Activated CD4-positive, alpha-beta memory T cell treated with anti-CD3 and anti-CD28 coated beads, Interleukin-2, amount 10 ng/mL, durations not matched to agents 7 days and 5 days (primary cell): ENCODE measurements at regions of chr2 and their contacts with region 1.

Region 1: DNA sequence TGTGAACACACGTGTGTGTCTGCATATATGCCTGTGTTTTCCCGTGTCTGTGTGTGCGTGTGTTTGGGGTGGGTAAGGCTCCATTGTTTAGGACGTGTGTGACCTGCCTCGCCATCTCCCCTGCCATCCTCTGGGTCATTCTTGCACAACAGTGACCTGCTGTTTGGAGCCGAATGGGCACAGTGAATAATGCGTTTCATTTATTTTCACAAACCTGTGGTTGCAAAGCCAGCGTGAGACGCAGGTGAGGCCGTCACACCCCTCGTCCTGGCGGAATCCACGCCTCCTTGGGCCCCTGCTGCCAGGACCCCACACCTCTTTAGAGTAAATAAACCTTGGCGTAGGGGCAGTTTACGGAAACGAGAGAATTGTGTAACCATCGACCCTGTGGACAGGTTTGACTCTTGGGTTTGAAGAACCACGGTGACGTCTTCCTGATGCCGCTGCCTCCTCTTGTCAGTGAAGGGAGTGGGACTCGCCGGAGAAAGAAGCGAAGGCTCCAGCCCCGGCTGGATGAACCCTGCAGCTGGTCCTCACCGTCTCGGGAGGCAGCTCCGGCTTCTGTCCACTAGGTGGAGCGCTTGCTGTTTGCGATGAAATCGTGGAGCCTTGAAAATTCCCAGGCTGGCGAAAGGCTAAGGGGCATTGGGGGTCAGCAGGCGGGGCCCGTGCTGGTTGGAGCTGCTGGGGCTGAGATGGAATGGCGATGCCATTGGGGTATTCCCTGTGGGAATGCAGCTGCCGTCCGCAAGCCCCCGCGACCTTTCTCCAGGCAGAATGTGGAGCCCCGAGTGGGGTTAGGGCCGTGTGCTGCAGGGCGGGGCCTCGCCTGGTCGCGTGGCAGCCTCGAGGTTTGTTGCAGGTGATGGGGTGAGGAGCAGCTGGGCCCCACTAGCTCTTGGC is 81.1 kb downstream of the RTP5 start:
- DNase-seq: peak; percentile 60
- H3K4me3 Mint-ChIP-seq: no peak overlapping the region
- H3K27ac Mint-ChIP-seq: no peak overlapping the region
- H3K4me1 Mint-ChIP-seq: no peaks in the 10 kb centered on the region
- H3K27me3 Mint-ChIP-seq: no peaks in the 10 kb centered on the region

Region 2: GRCh38 chr2:241867776-241868420 is 82.8 kb before region 1 on chr2:
- CTCF ChIA-PET with region 1: no interaction called
- POLR2A ChIA-PET with region 1: no interaction called
- DNase-seq: peak; percentile 48
- H3K4me3 Mint-ChIP-seq: no peak overlapping the region
- H3K27ac Mint-ChIP-seq: no peak overlapping the region
- H3K4me1 Mint-ChIP-seq: peaks cover 64% of the 10 kb centered on the region
- H3K27me3 Mint-ChIP-seq: peaks cover 25% of the 10 kb centered on the region

Region 3: GRCh38 chr2:241933179-241933911 is 17.3 kb before region 1 on chr2:
- CTCF ChIA-PET with region 1: interaction called, 17 read pairs
- POLR2A ChIA-PET with region 1: no interaction called
- DNase-seq: peak; percentile 58
- H3K4me3 Mint-ChIP-seq: peak overlapping the region; percentile 14
- H3K27ac Mint-ChIP-seq: peak overlapping the region; percentile 86
- H3K4me1 Mint-ChIP-seq: peaks cover 35% of the 10 kb centered on the region
- H3K27me3 Mint-ChIP-seq: no peaks in the 10 kb centered on the region

Region 4: DNA sequence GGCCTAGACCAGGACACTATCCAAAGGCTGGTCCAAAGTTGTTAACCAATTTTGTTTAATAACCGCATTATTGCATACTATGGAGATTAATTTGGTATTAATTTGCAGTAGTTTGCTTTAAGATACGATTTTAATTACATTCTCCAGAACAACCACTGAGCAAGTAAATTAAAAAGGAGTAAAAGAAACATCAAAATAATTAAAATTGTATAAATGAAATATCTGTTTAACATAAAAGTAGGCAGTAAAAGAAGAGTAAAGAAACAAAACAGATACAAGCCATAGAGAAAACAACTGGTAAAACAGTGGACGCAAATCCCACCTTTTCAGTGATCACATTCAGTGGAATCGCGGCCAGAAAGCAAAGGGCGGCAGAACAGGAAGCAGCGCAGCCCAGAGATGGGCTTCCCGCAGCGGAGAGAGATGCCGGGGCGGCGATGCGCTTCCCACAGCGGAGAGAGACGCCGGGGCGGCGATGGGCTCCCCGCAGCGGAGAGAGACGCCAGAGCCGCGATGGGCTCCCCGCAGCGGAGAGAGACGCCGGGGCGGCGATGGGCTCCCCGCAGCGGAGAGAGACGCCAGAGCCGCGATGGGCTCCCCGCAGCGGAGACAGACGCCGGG is 95.7 kb after region 1 on chr2:
- CTCF ChIA-PET with region 1: no interaction called
- POLR2A ChIA-PET with region 1: no interaction called
- DNase-seq: no peak
- H3K4me3 Mint-ChIP-seq: no peak overlapping the region
- H3K27ac Mint-ChIP-seq: no peak overlapping the region
- H3K4me1 Mint-ChIP-seq: no peaks in the 10 kb centered on the region
- H3K27me3 Mint-ChIP-seq: peaks cover 18% of the 10 kb centered on the region